ENCODE measurements at regions of chr5 and their contacts with region 1.

Region 1: GRCh38 chr5:136905574-136905973 is 540.2 kb upstream of the TRPC7 start:
- DNase-seq: no peak
- H3K4me3 Mint-ChIP-seq: no peak overlapping the region
- H3K27ac Mint-ChIP-seq: no peak overlapping the region
- H3K4me1 Mint-ChIP-seq: no peaks in the 10 kb centered on the region
- H3K27me3 Mint-ChIP-seq: no peaks in the 10 kb centered on the region
- CTCF ChIP-seq: no peak

Region 2: DNA sequence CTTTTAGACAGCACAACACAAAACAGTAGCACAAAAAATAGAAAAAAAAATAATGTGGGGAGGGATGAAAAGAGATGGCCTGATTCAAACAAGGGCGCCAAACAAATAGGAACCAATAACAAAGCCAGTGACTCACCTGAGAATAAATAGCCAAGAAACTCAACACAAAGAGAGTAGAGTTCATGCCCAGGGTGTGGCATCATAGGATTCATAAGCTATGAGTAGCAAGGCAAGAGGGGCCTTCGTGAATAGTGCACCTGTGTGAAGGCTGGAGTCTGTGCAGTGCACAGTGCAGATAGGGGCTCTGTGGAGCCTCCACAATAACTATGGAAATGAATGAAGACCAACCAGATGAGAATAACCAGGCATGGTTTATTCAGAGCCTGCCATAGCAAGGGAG is 51.9 kb after region 1 on chr5:
- CTCF ChIA-PET with region 1: no interaction called
- intact Hi-C with region 1: loop called (anchors 5 kb)
- DNase-seq: peak; percentile 77
- H3K4me3 Mint-ChIP-seq: peak overlapping the region; percentile 15
- H3K27ac Mint-ChIP-seq: peak overlapping the region; percentile 65
- H3K4me1 Mint-ChIP-seq: peaks cover 68% of the 10 kb centered on the region
- H3K27me3 Mint-ChIP-seq: no peaks in the 10 kb centered on the region
- CTCF ChIP-seq: no peak

Measured in Calu3 (cell line).